ENCODE measurements at regions of chr1 and their contacts with region 1.

Region 1: DNA sequence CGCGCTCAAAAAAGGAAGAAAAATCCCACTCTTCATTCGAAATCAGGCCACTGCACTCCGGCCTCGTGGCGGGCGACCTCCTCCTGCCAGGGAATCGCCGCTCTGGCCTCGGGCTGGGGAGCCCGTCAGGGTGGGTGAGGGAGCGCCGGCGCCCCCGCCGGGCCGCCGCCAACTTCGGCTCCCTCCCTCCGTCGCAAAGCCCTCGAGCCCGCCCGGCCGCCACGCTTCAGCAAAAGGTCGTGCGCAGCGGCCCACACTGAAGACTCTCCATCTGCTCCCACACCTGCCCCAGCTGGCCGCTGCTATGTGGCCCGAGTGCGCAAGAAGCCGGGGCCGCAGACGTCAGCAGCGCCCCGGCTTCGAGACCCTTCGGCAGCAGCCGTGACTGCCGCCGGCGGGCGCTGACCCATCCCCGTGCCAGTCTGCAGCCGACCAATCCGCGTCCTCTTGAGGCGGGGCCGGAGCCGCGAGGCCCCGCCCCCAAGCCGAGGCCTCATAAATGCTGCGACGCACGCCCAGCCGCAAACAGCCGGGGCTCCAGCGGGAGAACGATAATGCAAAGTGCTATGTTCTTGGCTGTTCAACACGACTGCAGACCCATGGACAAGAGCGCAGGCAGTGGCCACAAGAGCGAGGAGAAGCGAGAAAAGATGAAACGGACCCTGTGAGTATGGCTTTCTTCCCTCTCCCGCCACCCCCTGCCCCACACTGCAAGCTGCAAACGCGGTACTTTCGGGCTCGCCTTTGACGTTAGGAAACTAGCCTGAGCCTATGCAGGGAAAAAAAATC is at the start of gene RGS2:
- DNase-seq: peak; percentile 66
- ATAC-seq: peak; percentile 98
- H3K4me3 ChIP-seq: peak within 1 kb of the TSS; percentile 28 to 62 (median 61); a peak in 5 of 6 replicates
- H3K27ac ChIP-seq: no peak within 1 kb of the TSS
- H3K4me1 ChIP-seq: peaks cover 29% of the 10 kb centered on the region
- H3K27me3 ChIP-seq: peaks cover 0 to 4% of the 10 kb centered on the region in 2 experiments; a peak in 1 of 5 replicates
- CTCF ChIP-seq: peak; percentile 64
- EP300 ChIP-seq: no peak
- POLR2A ChIP-seq: peak; percentile 73 to 77
- RAD21 ChIP-seq: peak; percentile 33; the same call in 1 of the 2 replicates
- total RNA-seq, gene RGS2: 0.64 and 0.86 TPM in 2 replicates

Region 2: GRCh38 chr1:192477630-192478029 is 331.1 kb before region 1 on chr1:
- CTCF ChIA-PET with region 1: interaction called, 3 read pairs
- POLR2A ChIA-PET with region 1: no interaction called
- in situ Hi-C with region 1: no loop called
- intact Hi-C with region 1: loop called (anchors 1 kb)
- DNase-seq: peak; percentile 16
- ATAC-seq: no peak; the same call in 2 of the 3 replicates
- H3K4me3 ChIP-seq: no peak overlapping the region
- H3K27ac ChIP-seq: no peak overlapping the region
- H3K4me1 ChIP-seq: no peaks in the 10 kb centered on the region
- H3K27me3 ChIP-seq: peaks cover 0 to 10% of the 10 kb centered on the region in 2 experiments; a peak in 1 of 5 replicates
- CTCF ChIP-seq: peak; percentile 56
- EP300 ChIP-seq: no peak
- POLR2A ChIP-seq: no peak
- RAD21 ChIP-seq: no peak; the same call in 1 of the 2 replicates

Region 3: DNA sequence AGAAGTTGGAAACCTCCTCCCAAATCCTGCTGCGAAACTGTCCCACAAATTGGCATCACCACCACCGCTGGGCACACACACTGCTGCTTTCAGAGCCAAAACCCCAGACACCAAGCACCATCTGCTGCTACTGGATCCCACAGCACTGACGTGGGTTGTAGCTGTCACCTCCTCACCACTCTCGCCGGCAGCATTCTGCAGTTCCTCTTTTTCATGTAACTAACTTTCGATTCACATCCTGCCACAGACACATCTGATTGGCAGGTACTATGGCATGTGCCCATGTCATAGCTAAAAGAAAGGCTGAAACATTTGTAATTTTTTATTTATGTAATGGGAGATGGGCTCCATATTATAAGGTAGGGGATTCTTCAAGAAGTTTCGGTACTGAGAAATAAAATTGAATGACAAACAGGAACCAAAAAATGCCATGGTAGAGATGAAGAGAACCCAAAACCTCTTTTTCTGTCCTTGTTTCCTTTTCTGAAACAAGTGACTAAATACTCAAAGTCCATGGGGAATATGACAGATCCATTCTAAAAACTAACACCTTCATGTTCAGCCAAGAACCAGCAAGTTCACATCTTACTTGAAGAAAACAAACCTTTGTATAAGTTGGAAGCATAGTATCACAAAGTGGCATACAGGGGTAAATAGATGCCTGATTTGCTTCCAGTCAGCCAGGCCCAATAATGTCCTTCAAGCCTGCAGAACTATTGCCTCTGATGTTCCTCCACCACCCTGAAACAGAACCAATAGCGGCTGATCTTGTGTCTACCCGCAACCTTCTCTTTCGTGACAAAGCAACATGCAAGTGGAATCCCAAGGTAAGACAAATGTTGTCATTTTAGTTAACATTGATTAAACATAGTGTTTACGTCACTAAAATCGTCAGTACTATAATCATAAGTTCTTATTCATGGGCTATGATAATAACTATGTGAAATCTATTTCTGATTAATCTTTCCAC is 199.3 kb before region 1 on chr1:
- CTCF ChIA-PET with region 1: interaction called, 3 read pairs
- POLR2A ChIA-PET with region 1: no interaction called
- in situ Hi-C with region 1: no loop called
- intact Hi-C with region 1: loop called (anchors 5 kb)
- DNase-seq: no peak
- ATAC-seq: no peak
- H3K4me3 ChIP-seq: no peak overlapping the region
- H3K27ac ChIP-seq: no peak overlapping the region
- H3K4me1 ChIP-seq: 0 out of 2 replicates have a peak, but pooled peaks cover 13% of the 10 kb centered on the region
- H3K27me3 ChIP-seq: no peaks in the 10 kb centered on the region
- CTCF ChIP-seq: no peak
- EP300 ChIP-seq: no peak
- POLR2A ChIP-seq: no peak
- RAD21 ChIP-seq: no peak

Region 4: GRCh38 chr1:192709544-192709943 is 99.2 kb before region 1 on chr1:
- CTCF ChIA-PET with region 1: no interaction called
- POLR2A ChIA-PET with region 1: no interaction called
- in situ Hi-C with region 1: no loop called
- intact Hi-C with region 1: loop called (anchors 2 kb)
- DNase-seq: peak; percentile 87
- ATAC-seq: peak; percentile 99
- H3K4me3 ChIP-seq: no peak overlapping the region
- H3K27ac ChIP-seq: peak overlapping the region; percentile 7
- H3K4me1 ChIP-seq: peaks cover 57% of the 10 kb centered on the region
- H3K27me3 ChIP-seq: no peaks in the 10 kb centered on the region
- CTCF ChIP-seq: no peak
- EP300 ChIP-seq: no peak
- POLR2A ChIP-seq: no peak
- RAD21 ChIP-seq: no peak

Region 5: GRCh38 chr1:192846950-192847349 is 38.2 kb after region 1 on chr1:
- CTCF ChIA-PET with region 1: no interaction called
- POLR2A ChIA-PET with region 1: no interaction called
- in situ Hi-C with region 1: no loop called
- intact Hi-C with region 1: no loop called
- DNase-seq: no peak
- ATAC-seq: no peak
- H3K4me3 ChIP-seq: no peak overlapping the region
- H3K27ac ChIP-seq: no peak overlapping the region
- H3K4me1 ChIP-seq: peaks cover 12% of the 10 kb centered on the region; the same call in 1 of the 2 replicates
- H3K27me3 ChIP-seq: no peaks in the 10 kb centered on the region
- CTCF ChIP-seq: no peak
- EP300 ChIP-seq: no peak
- POLR2A ChIP-seq: no peak
- RAD21 ChIP-seq: no peak

Region 6: GRCh38 chr1:193031438-193031837 is 222.7 kb after region 1 on chr1:
- CTCF ChIA-PET with region 1: no interaction called
- POLR2A ChIA-PET with region 1: no interaction called
- in situ Hi-C with region 1: no loop called
- intact Hi-C with region 1: loop called (anchors 1 kb)
- DNase-seq: no peak
- ATAC-seq: peak; percentile 32; the same call in 1 of the 3 replicates
- H3K4me3 ChIP-seq: no peak overlapping the region
- H3K27ac ChIP-seq: no peak overlapping the region
- H3K4me1 ChIP-seq: peaks cover 14% of the 10 kb centered on the region
- H3K27me3 ChIP-seq: no peaks in the 10 kb centered on the region
- CTCF ChIP-seq: peak; percentile 36
- EP300 ChIP-seq: no peak
- POLR2A ChIP-seq: no peak
- RAD21 ChIP-seq: no peak

Measured in HepG2 (cell line).